Mammary epithelial cell (primary cell): ENCODE measurements at regions of chr16 and their contacts with region 1.

Region 1: DNA sequence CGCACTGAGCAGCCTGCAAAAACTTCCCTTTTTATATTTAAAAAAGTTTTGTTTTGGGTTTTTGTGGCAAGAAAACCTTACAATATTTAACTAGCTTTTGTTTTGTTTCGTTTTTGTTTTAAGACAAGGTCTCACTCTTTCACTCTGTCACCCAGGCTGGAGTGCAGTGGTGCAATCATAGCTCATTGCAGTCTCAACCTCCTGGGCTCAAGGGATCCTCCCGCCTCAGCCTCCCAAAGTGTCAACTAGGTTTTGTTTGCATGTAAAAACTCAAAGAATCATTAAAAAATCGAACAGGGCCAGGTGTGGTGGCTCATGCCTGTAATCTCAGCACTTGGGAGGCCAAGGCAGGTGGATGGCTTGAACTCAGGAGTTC is 77.9 kb upstream of the FA2H start:
- DNase-seq: no peak
- H3K4me3 ChIP-seq: no peak overlapping the region
- H3K27ac ChIP-seq: no peak overlapping the region
- H3K4me1 ChIP-seq: no peaks in the 10 kb centered on the region
- H3K27me3 ChIP-seq: no peaks in the 10 kb centered on the region
- CTCF ChIP-seq: no peak

Region 2: DNA sequence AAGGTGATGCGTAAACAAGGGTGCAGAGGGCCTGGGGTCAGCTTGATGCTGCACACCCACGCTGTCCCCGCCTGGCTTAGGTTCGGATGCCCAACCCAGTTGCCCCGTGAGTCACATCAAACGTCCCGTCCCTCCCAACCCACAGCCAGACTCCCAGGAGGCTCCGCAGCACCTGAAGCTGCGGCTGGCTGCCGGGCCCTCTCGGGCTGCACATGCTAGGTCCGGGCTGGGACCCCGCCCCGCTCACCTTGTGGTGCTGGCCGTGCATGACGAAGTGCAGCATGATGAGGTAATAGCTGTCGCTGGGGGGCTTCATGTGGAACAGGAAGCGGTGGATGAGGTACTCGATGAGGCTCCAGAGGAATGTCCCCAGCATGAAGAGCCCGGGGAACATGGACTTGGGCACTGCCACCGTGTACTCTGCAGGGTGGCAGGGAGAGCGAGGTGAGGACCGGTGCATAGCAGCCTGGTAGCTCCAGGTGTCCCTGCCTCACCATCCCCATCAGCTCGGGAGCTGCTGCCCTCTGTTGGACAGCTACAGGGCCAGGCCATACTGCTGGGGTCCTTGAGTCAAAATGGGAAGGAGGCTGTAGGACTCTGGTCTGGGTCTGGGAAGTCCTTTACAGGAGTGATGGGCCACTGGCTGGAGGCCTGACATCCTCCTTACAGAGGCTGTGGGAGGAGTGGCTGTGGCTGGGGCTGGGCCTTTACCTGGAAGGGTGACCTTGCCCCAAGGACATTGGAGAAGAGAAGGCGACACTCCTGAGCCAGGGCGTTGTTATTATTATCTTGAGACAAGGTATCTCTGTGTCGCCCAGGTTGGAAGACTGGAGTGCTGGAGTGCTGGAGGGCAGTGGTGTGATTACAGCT is 133.5 kb before region 1 on chr16:
- CTCF ChIA-PET with region 1: no interaction called
- dilution Hi-C with region 1: no loop called
- in situ Hi-C with region 1: loop called in 1 of 2 experiments (anchors 10 kb)
- intact Hi-C with region 1: no loop called
- DNase-seq: no peak
- H3K4me3 ChIP-seq: no peak overlapping the region
- H3K27ac ChIP-seq: no peak overlapping the region
- H3K4me1 ChIP-seq: no peaks in the 10 kb centered on the region
- H3K27me3 ChIP-seq: no peaks in the 10 kb centered on the region
- CTCF ChIP-seq: no peak